ENCODE measurements at regions of chr14 and their contacts with region 1.

Region 1: DNA sequence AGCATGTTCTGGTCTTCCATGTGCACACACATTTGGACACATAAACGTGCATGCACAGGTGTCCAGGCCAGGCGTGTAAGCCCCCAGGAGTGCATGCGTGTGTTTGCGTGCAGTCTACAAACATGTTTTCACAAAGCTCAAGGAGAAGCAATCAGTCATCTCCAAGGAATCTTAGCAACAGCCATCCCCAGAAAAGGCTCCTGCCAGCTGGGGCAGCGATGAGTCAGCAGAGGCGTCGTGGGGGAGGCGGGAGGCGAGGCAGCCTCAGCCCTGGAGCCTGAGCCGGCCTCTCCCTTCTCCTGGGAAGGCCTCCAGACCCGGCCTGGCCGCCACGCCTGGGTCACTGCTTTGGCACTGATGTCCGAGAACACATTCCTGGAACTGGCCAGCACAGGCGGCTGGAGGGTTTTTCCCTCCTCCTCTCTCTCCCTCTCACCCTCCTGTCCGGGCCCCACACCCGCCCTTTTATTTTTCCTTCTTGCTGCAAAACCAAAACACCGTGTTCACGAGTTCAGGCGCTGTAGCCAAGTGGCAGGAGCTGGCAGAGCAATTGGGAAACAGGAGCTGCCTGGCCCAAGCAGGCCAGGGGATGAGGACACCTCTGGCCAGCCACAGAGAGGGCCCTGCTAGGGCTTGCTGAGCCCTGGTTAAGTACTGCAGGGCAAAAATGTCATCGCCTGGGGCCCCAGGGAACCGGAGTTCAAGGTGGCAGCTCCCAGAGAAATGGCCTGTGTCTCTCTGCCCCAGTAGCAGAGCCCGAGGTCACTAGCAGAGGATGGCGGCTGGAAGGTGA is 92.7 kb downstream of the LRRC74A start:
- DNase-seq: no peak
- H3K4me3 ChIP-seq: no peak overlapping the region
- H3K4me3 Mint-ChIP-seq: peak overlapping the region in 1 of 8 donors; percentile 15
- H3K27ac ChIP-seq: no peak overlapping the region
- H3K27ac Mint-ChIP-seq: peak overlapping the region in 2 of 7 donors; percentile 46 to 57
- H3K4me1 ChIP-seq: peaks cover 32% of the 10 kb centered on the region
- H3K4me1 Mint-ChIP-seq: peaks cover 18 to 59% (median 43%) of the 10 kb centered on the region in 4 donors
- H3K27me3 ChIP-seq: no peaks in the 10 kb centered on the region
- H3K27me3 Mint-ChIP-seq: no peaks in the 10 kb centered on the region

Region 2: GRCh38 chr14:76720382-76720813 is 198.5 kb before region 1 on chr14:
- CTCF ChIA-PET with region 1: no interaction called
- POLR2A ChIA-PET with region 1: no interaction called
- intact Hi-C with region 1: no loop called
- DNase-seq: no peak
- H3K4me3 ChIP-seq: no peak overlapping the region
- H3K4me3 Mint-ChIP-seq: peak overlapping the region in 1 of 8 donors; percentile 24
- H3K27ac ChIP-seq: no peak overlapping the region
- H3K27ac Mint-ChIP-seq: peak overlapping the region in 4 of 7 donors; percentile 60 to 81 (median 70)
- H3K4me1 ChIP-seq: peaks cover 7% of the 10 kb centered on the region
- H3K4me1 Mint-ChIP-seq: no peaks in the 10 kb centered on the region
- H3K27me3 ChIP-seq: no peaks in the 10 kb centered on the region
- H3K27me3 Mint-ChIP-seq: peaks cover 19 to 27% of the 10 kb centered on the region in 2 donors

Region 3: DNA sequence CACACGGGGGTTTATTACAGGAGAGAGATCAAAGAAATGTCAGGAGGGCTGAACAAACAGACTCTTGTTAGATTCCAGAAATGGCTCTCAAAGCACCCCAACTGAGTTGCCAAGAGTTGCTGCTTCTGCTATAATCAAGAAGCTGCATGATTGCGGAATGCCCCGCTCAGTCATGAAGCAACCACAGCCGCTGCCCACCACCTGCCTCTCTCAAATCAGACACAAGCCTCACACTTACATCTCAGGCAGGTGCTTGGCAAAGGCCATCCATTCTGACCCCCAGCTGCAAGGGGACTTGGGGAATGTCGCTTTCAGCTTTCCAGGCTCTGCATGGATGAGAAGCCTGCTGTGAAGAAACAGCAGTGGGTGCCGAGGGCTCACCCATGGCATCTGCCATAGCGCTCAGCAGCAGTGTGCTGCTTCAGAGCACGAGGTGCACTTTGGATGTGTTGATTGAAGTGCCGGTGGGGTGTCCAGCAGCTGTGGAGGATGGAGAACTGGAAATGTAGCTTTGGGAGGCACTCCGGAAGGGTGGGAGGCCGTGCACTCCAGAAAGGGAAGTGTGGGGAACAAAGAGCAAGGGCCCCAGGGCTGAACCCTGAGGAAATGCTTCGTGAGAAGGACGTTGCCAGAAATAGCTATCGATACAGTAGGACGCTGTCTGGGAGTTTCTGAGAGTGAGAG is 55.1 kb before region 1 on chr14:
- CTCF ChIA-PET with region 1: no interaction called
- POLR2A ChIA-PET with region 1: no interaction called
- intact Hi-C with region 1: no loop called
- DNase-seq: no peak
- H3K4me3 ChIP-seq: no peak overlapping the region
- H3K4me3 Mint-ChIP-seq: peak overlapping the region in 4 of 8 donors; percentile 28 to 47 (median 44)
- H3K27ac ChIP-seq: no peak overlapping the region
- H3K27ac Mint-ChIP-seq: peak overlapping the region in 2 of 7 donors; percentile 70 to 89
- H3K4me1 ChIP-seq: peaks cover 13% of the 10 kb centered on the region
- H3K4me1 Mint-ChIP-seq: peaks cover 17 to 33% (median 24%) of the 10 kb centered on the region in 4 donors
- H3K27me3 ChIP-seq: no peaks in the 10 kb centered on the region
- H3K27me3 Mint-ChIP-seq: peaks cover 2 to 9% of the 10 kb centered on the region in 2 donors

Region 4: DNA sequence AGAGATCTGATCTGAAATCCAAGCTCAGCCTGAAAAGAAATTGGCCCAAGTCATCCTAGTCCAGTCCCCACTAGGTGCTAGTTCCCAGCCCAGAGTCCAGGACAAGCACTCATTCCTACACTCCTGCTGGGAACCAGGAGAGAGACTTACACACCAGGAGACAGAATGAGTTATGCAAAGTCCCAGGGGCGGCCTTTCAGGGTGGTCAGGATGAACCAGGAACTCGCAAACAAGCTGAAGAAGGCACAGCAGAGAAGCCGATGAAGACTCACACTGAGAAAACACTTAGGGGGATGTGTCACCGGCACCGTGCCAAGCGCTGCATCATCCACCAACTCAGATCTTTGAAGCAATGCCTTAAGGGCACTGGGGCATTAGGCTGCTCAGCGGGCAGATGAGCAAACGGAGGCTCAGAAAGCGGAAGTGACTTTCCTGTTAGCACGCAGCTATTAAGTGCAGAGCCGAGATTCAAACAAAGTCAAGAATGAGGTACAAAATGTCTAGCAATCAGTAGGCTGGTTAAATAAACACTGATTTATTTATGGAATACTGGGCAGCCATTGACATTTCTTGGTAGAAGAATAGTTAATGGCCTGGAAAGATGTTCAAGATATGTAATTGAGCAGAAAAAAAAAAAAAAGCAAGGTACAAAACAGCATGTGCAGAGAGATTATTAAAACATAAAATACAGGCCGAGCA is 14.1 kb before region 1 on chr14:
- CTCF ChIA-PET with region 1: interaction called, 17 read pairs
- POLR2A ChIA-PET with region 1: interaction called, 4 read pairs
- intact Hi-C with region 1: no loop called
- DNase-seq: peak; percentile 54 to 85 (median 62)
- H3K4me3 ChIP-seq: no peak overlapping the region
- H3K4me3 Mint-ChIP-seq: peak overlapping the region; percentile 54 to 77 (median 66)
- H3K27ac ChIP-seq: no peak overlapping the region
- H3K27ac Mint-ChIP-seq: peak overlapping the region; percentile 71 to 93 (median 88)
- H3K4me1 ChIP-seq: peaks cover 36% of the 10 kb centered on the region
- H3K4me1 Mint-ChIP-seq: peaks cover 21 to 36% (median 25%) of the 10 kb centered on the region in 4 donors
- H3K27me3 ChIP-seq: no peaks in the 10 kb centered on the region
- H3K27me3 Mint-ChIP-seq: no peaks in the 10 kb centered on the region

Region 5: DNA sequence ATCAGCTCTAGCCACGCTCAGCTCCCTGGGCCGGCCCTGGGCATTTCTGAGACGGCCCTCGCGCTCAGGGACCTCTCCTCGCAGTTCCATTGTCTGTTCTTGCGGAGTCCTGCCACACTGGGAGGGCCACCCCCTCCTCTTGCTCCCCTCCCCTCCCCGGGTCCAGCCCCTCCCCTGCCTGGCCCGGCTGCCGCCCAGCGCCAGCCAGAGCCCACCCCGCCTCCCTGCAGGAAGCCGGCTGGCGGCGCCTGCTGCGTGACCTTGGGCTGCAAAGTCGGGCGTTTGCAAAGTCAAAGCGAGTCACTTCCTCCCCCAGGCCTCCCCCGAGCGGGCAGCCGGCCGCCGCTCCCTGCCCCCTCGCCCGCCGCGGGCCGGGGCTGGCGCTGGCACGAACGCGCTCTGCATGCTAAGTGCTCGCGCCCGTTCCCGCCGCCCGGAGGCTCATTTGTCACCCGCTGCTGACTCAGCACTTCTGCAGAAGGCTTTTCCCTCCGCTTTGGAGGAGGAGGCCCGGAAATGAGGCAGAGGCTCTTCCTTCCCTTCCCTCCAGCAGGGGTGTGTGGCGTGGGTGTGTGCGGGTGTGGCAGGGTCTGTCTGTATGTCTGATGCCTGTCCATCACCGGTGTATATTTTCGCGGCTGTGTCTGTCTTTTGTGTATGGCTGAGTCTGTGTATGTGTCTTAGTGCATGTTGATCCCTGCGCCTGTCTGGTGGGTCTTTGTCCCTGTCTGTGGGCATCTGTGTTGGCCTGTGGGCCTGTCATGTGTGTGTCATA is 37.6 kb after region 1 on chr14:
- CTCF ChIA-PET with region 1: interaction called, 49 read pairs
- POLR2A ChIA-PET with region 1: interaction called, 12 read pairs
- intact Hi-C with region 1: no loop called
- DNase-seq: peak; percentile 83 to 97 (median 85)
- H3K4me3 ChIP-seq: peak overlapping the region; percentile 61 to 64
- H3K4me3 Mint-ChIP-seq: peak overlapping the region; percentile 81 to 96 (median 88)
- H3K27ac ChIP-seq: peak overlapping the region; percentile 94
- H3K27ac Mint-ChIP-seq: peak overlapping the region; percentile 87 to 99 (median 98)
- H3K4me1 ChIP-seq: peaks cover 72% of the 10 kb centered on the region
- H3K4me1 Mint-ChIP-seq: peaks cover 37 to 75% (median 53%) of the 10 kb centered on the region in 4 donors
- H3K27me3 ChIP-seq: no peaks in the 10 kb centered on the region
- H3K27me3 Mint-ChIP-seq: no peaks in the 10 kb centered on the region

Region 6: GRCh38 chr14:77000340-77001270 is 81.7 kb after region 1 on chr14:
- CTCF ChIA-PET with region 1: no interaction called
- POLR2A ChIA-PET with region 1: no interaction called
- intact Hi-C with region 1: no loop called
- DNase-seq: no peak
- H3K4me3 ChIP-seq: no peak overlapping the region
- H3K4me3 Mint-ChIP-seq: no peak overlapping the region
- H3K27ac ChIP-seq: no peak overlapping the region
- H3K27ac Mint-ChIP-seq: peak overlapping the region in 1 of 7 donors; percentile 81
- H3K4me1 ChIP-seq: no peaks in the 10 kb centered on the region
- H3K4me1 Mint-ChIP-seq: peaks cover 0 to 1% (median 0%) of the 10 kb centered on the region in 4 donors
- H3K27me3 ChIP-seq: no peaks in the 10 kb centered on the region
- H3K27me3 Mint-ChIP-seq: no peaks in the 10 kb centered on the region

Region 7: DNA sequence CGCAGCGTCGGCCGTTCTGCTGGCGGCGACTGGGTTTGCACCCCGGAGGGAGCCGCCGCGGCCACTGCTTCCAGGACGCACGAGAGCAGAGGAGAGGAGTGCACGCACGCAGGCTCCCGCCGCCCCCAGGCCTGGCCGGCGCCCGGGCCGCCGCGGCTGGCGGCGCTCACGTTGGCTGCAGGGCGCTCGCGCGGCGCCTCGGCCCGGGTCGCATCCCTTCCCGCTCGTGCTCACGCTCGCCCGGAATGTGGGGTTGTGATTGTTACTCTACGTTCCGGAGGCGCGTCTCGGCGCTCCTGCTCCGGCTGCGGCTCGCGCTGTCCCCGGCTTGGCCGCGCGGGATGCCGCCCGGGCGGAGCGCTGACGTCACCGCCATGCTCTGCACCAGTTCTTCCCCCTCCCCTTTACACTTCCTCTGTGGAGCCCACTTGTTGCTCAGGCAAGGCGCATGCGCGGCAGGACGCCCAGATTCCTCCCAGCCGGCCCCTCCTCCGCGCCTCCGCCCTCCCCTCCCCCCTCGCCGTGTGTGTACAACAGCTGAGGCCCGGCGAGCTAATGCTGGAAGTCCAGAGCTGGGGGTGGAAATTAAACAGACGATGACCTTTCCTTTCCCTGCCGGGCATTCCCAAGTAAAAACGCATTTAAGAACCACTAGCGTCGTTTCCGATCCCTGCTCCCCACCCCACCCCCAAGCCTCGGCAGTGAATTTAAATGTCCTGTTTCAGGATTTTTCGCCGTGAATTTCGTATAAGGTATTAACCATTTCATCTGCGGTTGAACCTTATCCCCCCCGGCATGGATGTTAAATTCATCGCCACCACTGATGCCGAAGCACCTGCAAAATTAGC is 109.7 kb after region 1 on chr14 and contains the start of gene IRF2BPL:
- CTCF ChIA-PET with region 1: interaction called, 18 read pairs
- POLR2A ChIA-PET with region 1: interaction called, 22 read pairs
- intact Hi-C with region 1: no loop called
- DNase-seq: peak; percentile 95 to 96 (median 95)
- H3K4me3 ChIP-seq: peak within 1 kb of the TSS; percentile 57 to 80
- H3K4me3 Mint-ChIP-seq: peak within 1 kb of the TSS; percentile 93 to 97 (median 95)
- H3K27ac ChIP-seq: peak within 1 kb of the TSS; percentile 93
- H3K27ac Mint-ChIP-seq: peak within 1 kb of the TSS; percentile 97 to 100 (median 98)
- H3K4me1 ChIP-seq: peaks cover 77% of the 10 kb centered on the region
- H3K4me1 Mint-ChIP-seq: peaks cover 37 to 72% (median 52%) of the 10 kb centered on the region in 4 donors
- H3K27me3 ChIP-seq: no peaks in the 10 kb centered on the region
- H3K27me3 Mint-ChIP-seq: no peaks in the 10 kb centered on the region
- total RNA-seq, gene IRF2BPL: 36.6 to 37.7 TPM

Region 8: GRCh38 chr14:77053046-77053841 is 134.3 kb after region 1 on chr14:
- CTCF ChIA-PET with region 1: interaction called, 360 read pairs
- POLR2A ChIA-PET with region 1: interaction called, 38 read pairs
- intact Hi-C with region 1: no loop called
- DNase-seq: peak; percentile 68 to 75 (median 69)
- H3K4me3 ChIP-seq: no peak overlapping the region
- H3K4me3 Mint-ChIP-seq: peak overlapping the region in 1 of 8 donors; percentile 51
- H3K27ac ChIP-seq: no peak overlapping the region
- H3K27ac Mint-ChIP-seq: peak overlapping the region in 6 of 7 donors; percentile 24 to 79 (median 49)
- H3K4me1 ChIP-seq: peaks cover 25% of the 10 kb centered on the region
- H3K4me1 Mint-ChIP-seq: peaks cover 16 to 36% (median 22%) of the 10 kb centered on the region in 4 donors
- H3K27me3 ChIP-seq: no peaks in the 10 kb centered on the region
- H3K27me3 Mint-ChIP-seq: no peaks in the 10 kb centered on the region

Region 9: GRCh38 chr14:77086017-77086736 is 167.2 kb after region 1 on chr14:
- CTCF ChIA-PET with region 1: interaction called, 11 read pairs
- POLR2A ChIA-PET with region 1: no interaction called
- intact Hi-C with region 1: no loop called
- DNase-seq: peak in 4 of 5 donors; percentile 41 to 59 (median 48)
- H3K4me3 ChIP-seq: no peak overlapping the region
- H3K4me3 Mint-ChIP-seq: peak overlapping the region in 1 of 8 donors; percentile 33
- H3K27ac ChIP-seq: no peak overlapping the region
- H3K27ac Mint-ChIP-seq: peak overlapping the region in 5 of 7 donors; percentile 68 to 97 (median 90)
- H3K4me1 ChIP-seq: peaks cover 17% of the 10 kb centered on the region
- H3K4me1 Mint-ChIP-seq: peaks cover 4 to 19% (median 8%) of the 10 kb centered on the region in 4 donors
- H3K27me3 ChIP-seq: no peaks in the 10 kb centered on the region
- H3K27me3 Mint-ChIP-seq: peaks cover 2 to 9% of the 10 kb centered on the region in 2 donors

Measured in CD4-positive, alpha-beta memory T cell (primary cell).